ENCODE measurements at regions of chr7 and their contacts with region 1.

Region 1: GRCh38 chr7:38932509-38933168 is 23.6 kb upstream of the VPS41 start:
- DNase-seq: peak; percentile 56
- ATAC-seq: peak; percentile 82
- H3K4me3 ChIP-seq: no peak overlapping the region
- H3K27ac ChIP-seq: no peak overlapping the region
- H3K4me1 ChIP-seq: no peaks in the 10 kb centered on the region
- H3K27me3 ChIP-seq: no peaks in the 10 kb centered on the region
- CTCF ChIP-seq: peak; percentile 95

Region 2: DNA sequence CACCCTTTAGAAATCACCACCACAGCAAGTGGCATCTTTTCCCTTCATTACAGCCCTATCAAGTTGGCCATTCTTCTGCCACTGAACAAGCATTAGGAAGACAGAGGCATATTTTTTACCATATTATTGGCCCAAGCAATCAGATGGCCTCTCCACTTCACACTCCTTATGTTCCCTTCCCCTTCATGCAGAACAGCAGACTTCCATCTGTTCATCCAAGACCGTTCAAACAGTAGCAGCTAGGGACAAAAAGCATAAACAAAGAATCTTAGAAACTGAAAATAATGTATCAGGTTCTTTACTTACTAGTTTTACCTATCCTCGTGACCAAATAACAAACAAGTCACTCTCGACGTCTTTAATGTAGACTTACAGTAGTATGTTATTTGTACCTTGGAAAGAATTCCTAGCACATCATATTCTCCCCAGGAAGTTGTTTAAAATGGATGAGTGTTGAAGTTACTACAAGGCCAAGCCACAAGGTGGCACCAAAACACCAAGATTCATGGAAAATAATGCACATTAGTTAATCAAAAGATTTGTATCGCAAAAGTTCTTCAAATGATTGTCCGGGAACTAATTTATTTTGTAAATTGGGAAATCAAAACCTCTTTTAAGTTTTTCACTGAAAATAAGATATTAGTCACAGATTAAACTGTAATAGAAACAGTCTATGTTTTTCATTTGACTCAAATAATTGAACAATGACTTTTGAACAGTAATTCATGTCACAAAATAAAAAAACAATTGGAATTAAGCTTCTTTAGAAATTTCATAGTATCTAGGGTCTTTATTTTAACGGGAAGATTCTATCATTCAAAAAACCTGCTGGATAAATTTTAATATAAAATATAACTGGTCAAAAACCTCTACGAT is 135.8 kb before region 1 on chr7:
- CTCF ChIA-PET with region 1: no interaction called
- POLR2A ChIA-PET with region 1: no interaction called
- in situ Hi-C with region 1: no loop called
- intact Hi-C with region 1: loop called (anchors 2 kb)
- DNase-seq: peak; percentile 39
- ATAC-seq: no peak
- H3K4me3 ChIP-seq: no peak overlapping the region
- H3K27ac ChIP-seq: no peak overlapping the region
- H3K4me1 ChIP-seq: no peaks in the 10 kb centered on the region
- H3K27me3 ChIP-seq: no peaks in the 10 kb centered on the region
- CTCF ChIP-seq: peak; percentile 78

Region 3: GRCh38 chr7:38873433-38873832 is 59.2 kb before region 1 on chr7:
- CTCF ChIA-PET with region 1: no interaction called
- POLR2A ChIA-PET with region 1: no interaction called
- in situ Hi-C with region 1: no loop called
- intact Hi-C with region 1: no loop called
- DNase-seq: no peak
- ATAC-seq: no peak
- H3K4me3 ChIP-seq: no peak overlapping the region
- H3K27ac ChIP-seq: no peak overlapping the region
- H3K4me1 ChIP-seq: no peaks in the 10 kb centered on the region
- H3K27me3 ChIP-seq: no peaks in the 10 kb centered on the region
- CTCF ChIP-seq: no peak

Region 4: GRCh38 chr7:39465055-39465929 is 532.7 kb after region 1 on chr7:
- CTCF ChIA-PET with region 1: no interaction called
- POLR2A ChIA-PET with region 1: no interaction called
- in situ Hi-C with region 1: no loop called
- intact Hi-C with region 1: loop called (anchors 1 kb)
- DNase-seq: peak; percentile 36
- ATAC-seq: peak; percentile 90
- H3K4me3 ChIP-seq: no peak overlapping the region
- H3K27ac ChIP-seq: no peak overlapping the region
- H3K4me1 ChIP-seq: peaks cover 4% of the 10 kb centered on the region; the same call in 1 of the 2 replicates
- H3K27me3 ChIP-seq: peaks cover 8% of the 10 kb centered on the region
- CTCF ChIP-seq: peak; percentile 88

Measured in Panc1 (cell line).